Activated CD4-positive, alpha-beta T cell treated with anti-CD3 and anti-CD28 coated beads, Interleukin-2, amount 10 ng/mL, durations not matched to agents 24 days and 14 days (primary cell): ENCODE measurements at regions of chr18 and their contacts with region 1.

Region 1: GRCh38 chr18:9913526-9914333 is at the start of gene VAPA:
- DNase-seq: peak; percentile 98
- H3K4me3 Mint-ChIP-seq: peak within 1 kb of the TSS; percentile 91
- H3K27ac Mint-ChIP-seq: peak within 1 kb of the TSS; percentile 94
- H3K4me1 Mint-ChIP-seq: peaks cover 25% of the 10 kb centered on the region
- H3K27me3 Mint-ChIP-seq: peaks cover 13% of the 10 kb centered on the region
- total RNA-seq, gene VAPA: 182 and 196 TPM in 2 replicates

Region 2: GRCh38 chr18:8704361-8705279 is 1209.1 kb before region 1 on chr18:
- intact Hi-C with region 1: loop called (anchors 10 kb)
- DNase-seq: peak; percentile 96
- H3K4me3 Mint-ChIP-seq: peak overlapping the region; percentile 95
- H3K27ac Mint-ChIP-seq: peak overlapping the region; percentile 72
- H3K4me1 Mint-ChIP-seq: peaks cover 9% of the 10 kb centered on the region
- H3K27me3 Mint-ChIP-seq: peaks cover 69% of the 10 kb centered on the region

Region 3: DNA sequence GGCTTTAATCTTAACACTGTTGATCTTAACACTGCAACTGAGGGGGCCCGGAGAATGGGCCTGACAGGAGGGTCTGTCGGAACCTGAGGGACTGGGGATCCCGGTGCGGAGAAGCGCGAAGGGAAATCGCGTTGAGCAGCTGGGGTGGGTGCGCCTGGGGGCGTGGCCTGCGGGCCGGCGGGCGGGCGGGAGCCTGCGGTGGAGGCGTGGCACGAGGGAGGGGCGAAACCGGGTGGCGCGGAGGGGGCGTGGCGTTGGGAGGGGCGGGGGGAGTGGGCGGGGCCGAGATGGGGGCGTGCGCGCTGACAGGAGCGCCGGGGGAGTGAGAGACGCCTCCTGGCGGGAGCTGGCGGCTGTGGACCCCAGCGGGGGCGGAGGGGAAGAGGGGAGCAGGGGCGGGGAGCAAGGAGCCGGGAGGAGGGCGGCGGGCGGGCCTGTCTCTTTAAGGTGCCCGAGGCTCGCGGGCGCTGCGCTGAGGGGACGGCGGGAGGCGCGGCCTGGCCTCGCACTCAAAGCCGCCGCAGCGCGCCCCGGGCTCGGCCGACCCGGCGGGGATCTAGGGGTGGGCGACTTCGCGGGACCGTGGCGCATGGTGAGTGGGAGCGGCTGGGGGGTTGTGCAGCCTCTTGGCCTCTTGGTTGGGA is 579.3 kb before region 1 on chr18 and contains the start of gene TWSG1:
- intact Hi-C with region 1: loop called (anchors 10 kb)
- DNase-seq: peak; percentile 97
- H3K4me3 Mint-ChIP-seq: peak within 1 kb of the TSS; percentile 83
- H3K27ac Mint-ChIP-seq: peak within 1 kb of the TSS; percentile 74
- H3K4me1 Mint-ChIP-seq: peaks cover 25% of the 10 kb centered on the region
- H3K27me3 Mint-ChIP-seq: peaks cover 29% of the 10 kb centered on the region
- total RNA-seq, gene TWSG1: 9.9 and 10.1 TPM in 2 replicates

Region 4: GRCh38 chr18:9614401-9615279 is 299.1 kb before region 1 on chr18 and contains the start of gene PPP4R1:
- intact Hi-C with region 1: loop called (anchors 5 kb)
- DNase-seq: peak; percentile 90
- H3K4me3 Mint-ChIP-seq: peak within 1 kb of the TSS; percentile 94
- H3K27ac Mint-ChIP-seq: peak within 1 kb of the TSS; percentile 89
- H3K4me1 Mint-ChIP-seq: peaks cover 38% of the 10 kb centered on the region
- H3K27me3 Mint-ChIP-seq: peaks cover 1% of the 10 kb centered on the region
- total RNA-seq, gene PPP4R1: 52.8 and 56.0 TPM in 2 replicates

Region 5: DNA sequence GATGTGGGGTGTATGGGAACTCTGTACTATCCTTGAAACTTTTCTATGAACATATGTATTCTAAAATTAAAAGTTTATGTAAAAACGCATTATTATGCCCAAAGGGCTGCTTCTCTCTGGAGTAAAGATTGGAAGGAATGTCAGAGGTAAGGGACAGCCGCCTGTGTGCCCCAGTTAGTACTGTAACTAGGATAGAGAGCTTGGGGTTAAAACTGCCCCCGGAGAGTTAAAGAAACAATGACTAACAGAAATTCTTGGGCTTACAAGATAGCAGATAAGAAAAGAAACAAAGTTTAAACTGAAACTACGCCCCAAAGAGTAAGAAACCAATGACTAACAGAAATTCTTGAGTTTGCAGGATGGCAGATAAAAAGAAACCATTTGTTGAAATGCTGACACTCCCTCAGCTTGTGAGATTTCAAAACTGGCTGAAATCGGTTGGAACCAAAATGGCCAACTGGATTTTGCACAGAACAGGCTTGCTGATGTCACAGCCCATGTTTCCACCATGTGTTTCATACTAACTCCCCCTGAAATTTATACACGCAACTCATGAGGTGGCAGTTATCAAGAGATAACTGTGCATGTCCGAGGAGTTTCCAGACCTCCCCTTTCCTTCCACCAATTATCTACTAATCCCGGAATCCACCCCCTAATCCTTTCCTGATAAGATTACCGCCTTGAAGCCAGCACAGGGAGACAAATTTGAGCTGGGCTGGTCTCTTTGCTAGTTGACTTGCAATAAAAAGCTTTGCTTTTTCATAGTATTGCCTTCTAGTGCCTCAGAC is 36.7 kb before region 1 on chr18:
- intact Hi-C with region 1: loop called (anchors 1 kb)
- DNase-seq: no peak
- H3K4me3 Mint-ChIP-seq: peak overlapping the region; percentile 55
- H3K27ac Mint-ChIP-seq: peak overlapping the region; percentile 78
- H3K4me1 Mint-ChIP-seq: peaks cover 12% of the 10 kb centered on the region
- H3K27me3 Mint-ChIP-seq: no peaks in the 10 kb centered on the region

Region 6: DNA sequence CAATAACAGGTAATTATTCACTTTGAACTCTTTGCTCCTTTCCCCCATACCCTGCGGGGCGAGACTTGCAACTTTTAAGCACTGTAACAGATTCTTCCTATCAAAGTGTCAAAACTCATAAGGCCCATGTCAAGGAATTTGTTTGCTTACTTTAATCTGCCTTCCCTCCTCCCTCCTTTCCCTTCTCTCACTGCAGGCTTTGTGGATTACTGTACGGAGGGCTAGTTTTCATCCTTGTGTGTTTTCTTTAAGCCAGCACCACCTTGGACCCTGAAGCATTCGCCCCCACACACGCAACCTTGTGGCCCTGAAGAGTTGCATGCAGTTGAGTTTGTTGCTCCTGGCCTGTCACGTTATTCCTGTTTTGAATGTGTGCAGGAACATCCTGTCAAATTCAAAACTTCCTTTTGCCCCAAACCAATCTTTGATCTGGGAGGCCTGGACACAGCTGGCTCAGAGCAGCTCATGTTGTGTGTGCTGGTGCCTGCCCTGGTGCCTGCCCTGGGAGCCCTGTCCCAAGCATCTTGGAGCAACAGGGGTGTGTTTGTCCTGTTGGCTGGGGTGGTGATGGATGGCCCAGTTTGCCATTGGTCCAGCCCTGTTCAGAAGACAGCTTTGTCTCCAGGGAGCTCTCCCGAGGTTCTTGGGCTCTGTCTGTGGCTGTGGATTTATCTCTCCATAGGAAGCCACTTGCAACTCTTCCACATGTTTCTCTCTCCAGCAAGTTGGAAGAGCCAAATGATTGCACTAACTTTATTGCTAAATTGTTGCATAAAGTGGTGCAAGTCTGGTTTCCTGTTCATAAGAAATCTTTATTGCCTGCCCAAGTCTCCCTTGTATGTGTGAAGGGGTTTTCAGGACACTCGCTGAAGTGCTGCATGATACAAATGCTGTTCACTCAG is 199.6 kb after region 1 on chr18:
- intact Hi-C with region 1: no loop called
- DNase-seq: no peak
- H3K4me3 Mint-ChIP-seq: no peak overlapping the region
- H3K27ac Mint-ChIP-seq: no peak overlapping the region
- H3K4me1 Mint-ChIP-seq: no peaks in the 10 kb centered on the region
- H3K27me3 Mint-ChIP-seq: peaks cover 8% of the 10 kb centered on the region

Region 7: GRCh38 chr18:10525371-10526210 is 611.9 kb after region 1 on chr18 and contains the start of gene NAPG:
- intact Hi-C with region 1: loop called (anchors 1 kb)
- DNase-seq: peak; percentile 98
- H3K4me3 Mint-ChIP-seq: peak within 1 kb of the TSS; percentile 96
- H3K27ac Mint-ChIP-seq: peak within 1 kb of the TSS; percentile 98
- H3K4me1 Mint-ChIP-seq: peaks cover 41% of the 10 kb centered on the region
- H3K27me3 Mint-ChIP-seq: peaks cover 8% of the 10 kb centered on the region
- total RNA-seq, gene NAPG: 36.4 and 38.7 TPM in 2 replicates